ENCODE measurements at regions of chr14 and their contacts with region 1.

Region 1: GRCh38 chr14:54329082-54329695 is 67.6 kb upstream of the CDKN3 start:
- DNase-seq: peak; percentile 81
- H3K4me3 ChIP-seq: no peak overlapping the region
- H3K27ac ChIP-seq: peak overlapping the region; percentile 24
- H3K4me1 ChIP-seq: peaks cover 55% of the 10 kb centered on the region
- H3K27me3 ChIP-seq: no peaks in the 10 kb centered on the region
- CTCF ChIP-seq: peak; percentile 72 to 74
- POLR2A ChIP-seq: no peak

Region 2: GRCh38 chr14:53432378-53432802 is 896.8 kb before region 1 on chr14:
- CTCF ChIA-PET with region 1: interaction called, 17 read pairs
- POLR2A ChIA-PET with region 1: no interaction called
- dilution Hi-C with region 1: no loop called
- intact Hi-C with region 1: no loop called
- DNase-seq: peak; percentile 70
- H3K4me3 ChIP-seq: no peak overlapping the region
- H3K27ac ChIP-seq: no peak overlapping the region
- H3K4me1 ChIP-seq: no peaks in the 10 kb centered on the region
- H3K27me3 ChIP-seq: peaks cover 6 to 14% of the 10 kb centered on the region in 2 experiments
- CTCF ChIP-seq: peak; percentile 64 to 68
- POLR2A ChIP-seq: no peak

Region 3: DNA sequence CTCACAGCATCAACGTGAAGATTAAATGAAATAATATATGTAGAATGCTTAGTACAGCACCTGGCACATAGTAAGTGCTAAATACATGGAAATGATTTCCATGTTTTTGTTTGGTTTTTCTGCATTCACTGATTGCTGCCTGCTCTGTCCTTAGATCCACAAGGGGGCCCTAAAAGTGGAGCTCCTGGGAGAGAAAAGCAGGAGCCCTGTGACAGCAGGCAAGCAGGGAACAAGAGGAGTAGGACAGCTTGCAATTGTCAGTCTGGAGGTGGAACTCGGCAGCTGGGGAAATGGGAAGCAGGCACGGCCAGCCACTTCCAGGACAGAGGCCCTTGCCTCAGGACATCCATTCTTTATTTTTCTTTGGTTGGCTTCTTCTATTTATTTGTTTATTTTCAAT is 665.5 kb before region 1 on chr14:
- CTCF ChIA-PET with region 1: interaction called, 16 read pairs
- POLR2A ChIA-PET with region 1: no interaction called
- dilution Hi-C with region 1: no loop called
- intact Hi-C with region 1: loop called (anchors 5 kb)
- DNase-seq: peak; percentile 51
- H3K4me3 ChIP-seq: no peak overlapping the region
- H3K27ac ChIP-seq: no peak overlapping the region
- H3K4me1 ChIP-seq: peaks cover 9% of the 10 kb centered on the region
- H3K27me3 ChIP-seq: no peaks in the 10 kb centered on the region
- CTCF ChIP-seq: peak; percentile 18 to 46
- POLR2A ChIP-seq: no peak

Region 4: DNA sequence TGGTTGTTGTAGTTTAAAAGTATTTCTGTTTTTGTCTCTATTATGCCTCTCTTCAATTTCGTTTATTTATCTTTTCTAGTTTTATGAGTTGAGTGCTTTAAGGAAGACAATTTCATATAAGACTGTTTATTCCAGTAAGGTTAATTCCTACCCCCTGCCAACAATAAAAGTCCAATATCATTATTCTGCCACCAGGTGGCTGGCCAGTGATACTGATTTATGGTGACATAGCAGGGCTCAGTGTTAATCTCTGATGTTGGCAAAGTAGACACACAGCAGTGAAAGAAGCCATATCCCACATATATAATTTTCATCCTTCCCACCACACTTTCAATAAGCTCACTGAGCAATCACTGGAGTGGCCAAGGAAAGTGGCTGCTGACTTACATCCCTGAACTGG is 303.5 kb before region 1 on chr14:
- CTCF ChIA-PET with region 1: interaction called, 3 read pairs
- POLR2A ChIA-PET with region 1: no interaction called
- dilution Hi-C with region 1: no loop called
- intact Hi-C with region 1: loop called (anchors 2 kb)
- DNase-seq: peak; percentile 73
- H3K4me3 ChIP-seq: no peak overlapping the region
- H3K27ac ChIP-seq: no peak overlapping the region
- H3K4me1 ChIP-seq: no peaks in the 10 kb centered on the region
- H3K27me3 ChIP-seq: no peaks in the 10 kb centered on the region
- CTCF ChIP-seq: peak; percentile 27 to 46
- POLR2A ChIP-seq: no peak

Region 5: DNA sequence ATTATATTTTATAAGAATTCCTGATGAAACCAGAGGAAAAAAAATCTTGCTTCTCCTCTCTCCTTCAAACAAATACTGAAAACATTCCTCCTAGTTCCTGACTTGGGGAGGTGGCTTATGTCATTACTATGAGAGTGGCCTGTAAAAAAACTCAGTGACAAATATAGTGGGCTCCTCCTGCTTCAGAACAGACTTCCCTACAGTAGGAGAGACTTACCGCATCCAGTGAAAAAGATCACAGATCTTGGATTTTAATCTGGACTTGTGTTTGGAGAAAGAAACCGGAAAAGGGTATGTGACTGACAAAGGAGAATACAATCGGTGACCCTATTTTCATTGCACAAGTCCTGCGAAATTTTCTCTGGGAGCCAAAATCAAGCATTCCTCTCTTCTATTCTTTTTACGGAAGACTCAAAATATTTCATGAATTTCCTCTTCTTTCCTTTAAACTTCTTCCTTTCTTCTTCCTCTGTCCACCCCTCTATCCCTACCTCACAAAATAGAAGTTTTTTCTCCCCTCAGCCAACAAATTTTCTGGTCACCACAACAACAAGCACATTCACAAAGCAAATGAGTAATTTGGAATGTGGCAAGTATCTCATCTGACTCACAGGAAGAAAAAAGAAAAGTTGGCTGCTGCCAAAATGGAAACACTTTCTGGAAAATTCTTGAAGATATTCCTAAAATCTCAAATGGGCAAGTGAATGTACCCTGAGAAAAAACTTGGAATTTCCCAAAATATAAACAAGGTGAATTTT is 117.5 kb before region 1 on chr14:
- CTCF ChIA-PET with region 1: interaction called, 9 read pairs
- POLR2A ChIA-PET with region 1: no interaction called
- dilution Hi-C with region 1: no loop called
- intact Hi-C with region 1: loop called (anchors 1 kb)
- DNase-seq: peak; percentile 86
- H3K4me3 ChIP-seq: no peak overlapping the region
- H3K27ac ChIP-seq: peak overlapping the region; percentile 91
- H3K4me1 ChIP-seq: peaks cover 25% of the 10 kb centered on the region
- H3K27me3 ChIP-seq: no peaks in the 10 kb centered on the region
- CTCF ChIP-seq: no peak
- POLR2A ChIP-seq: no peak

Region 6: DNA sequence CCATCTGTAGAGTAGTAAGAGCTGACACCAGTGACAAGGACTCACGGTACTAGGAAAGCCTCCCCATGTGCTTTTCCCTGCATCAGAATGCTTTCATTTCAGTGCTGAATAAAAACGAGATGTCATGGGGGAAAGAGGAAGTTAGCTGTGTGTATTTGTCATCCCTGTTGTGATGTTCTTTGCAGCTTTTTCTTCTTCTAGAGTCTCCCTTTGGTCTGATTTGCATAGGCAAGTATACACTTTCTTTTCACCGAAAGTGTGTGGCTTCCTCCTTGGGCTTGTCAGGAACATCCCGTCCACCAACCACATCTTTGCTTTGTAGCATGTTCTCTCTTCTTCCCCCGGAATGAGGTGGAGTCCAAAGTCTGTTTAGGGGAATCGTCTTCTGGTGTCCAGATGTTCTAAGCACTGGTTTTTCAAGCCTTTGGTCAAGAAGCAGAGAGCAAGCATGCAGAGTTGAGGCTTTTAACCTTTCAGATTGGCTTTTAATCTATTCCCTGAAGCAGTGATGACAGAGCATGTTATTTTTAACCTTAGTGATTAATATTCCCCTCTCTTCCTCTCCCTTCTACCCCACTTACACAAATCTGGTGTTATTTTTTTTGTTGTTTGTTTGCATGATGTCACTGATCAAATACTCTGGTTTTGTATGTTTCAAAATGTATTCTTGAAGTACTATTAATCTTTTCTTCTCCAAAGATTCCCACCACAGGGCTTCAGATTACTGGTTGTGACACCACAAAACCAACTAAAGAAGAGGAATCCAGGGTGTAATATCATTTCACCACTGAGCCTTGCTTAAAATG is 401.2 kb after region 1 on chr14:
- CTCF ChIA-PET with region 1: no interaction called
- POLR2A ChIA-PET with region 1: no interaction called
- dilution Hi-C with region 1: no loop called
- intact Hi-C with region 1: no loop called
- DNase-seq: no peak
- H3K4me3 ChIP-seq: no peak overlapping the region
- H3K27ac ChIP-seq: no peak overlapping the region
- H3K4me1 ChIP-seq: peaks cover 3% of the 10 kb centered on the region
- H3K27me3 ChIP-seq: no peaks in the 10 kb centered on the region
- CTCF ChIP-seq: no peak
- POLR2A ChIP-seq: no peak